Transverse colon (tissue), 4 donors: ENCODE measurements at regions of chr7 and their contacts with region 1.

Region 1: GRCh38 chr7:87886875-87887274 is 10.6 kb downstream of the DBF4 start:
- DNase-seq: no peak
- H3K4me3 ChIP-seq: no peak overlapping the region
- H3K27ac ChIP-seq: no peak overlapping the region
- H3K4me1 ChIP-seq: no peaks in the 10 kb centered on the region
- H3K27me3 ChIP-seq: no peaks in the 10 kb centered on the region
- CTCF ChIP-seq: peak; percentile 38 to 58 (median 50)
- EP300 ChIP-seq: no peak
- POLR2A ChIP-seq: no peak

Region 2: GRCh38 chr7:87416682-87417587 is 469.9 kb before region 1 on chr7:
- in situ Hi-C with region 1: no loop called
- intact Hi-C with region 1: loop called (anchors 5 kb)
- DNase-seq: peak; percentile 63
- H3K4me3 ChIP-seq: no peak overlapping the region
- H3K27ac ChIP-seq: no peak overlapping the region
- H3K4me1 ChIP-seq: no peaks in the 10 kb centered on the region
- H3K27me3 ChIP-seq: no peaks in the 10 kb centered on the region
- CTCF ChIP-seq: peak; percentile 62 to 80 (median 70)
- EP300 ChIP-seq: no peak
- POLR2A ChIP-seq: no peak

Region 3: DNA sequence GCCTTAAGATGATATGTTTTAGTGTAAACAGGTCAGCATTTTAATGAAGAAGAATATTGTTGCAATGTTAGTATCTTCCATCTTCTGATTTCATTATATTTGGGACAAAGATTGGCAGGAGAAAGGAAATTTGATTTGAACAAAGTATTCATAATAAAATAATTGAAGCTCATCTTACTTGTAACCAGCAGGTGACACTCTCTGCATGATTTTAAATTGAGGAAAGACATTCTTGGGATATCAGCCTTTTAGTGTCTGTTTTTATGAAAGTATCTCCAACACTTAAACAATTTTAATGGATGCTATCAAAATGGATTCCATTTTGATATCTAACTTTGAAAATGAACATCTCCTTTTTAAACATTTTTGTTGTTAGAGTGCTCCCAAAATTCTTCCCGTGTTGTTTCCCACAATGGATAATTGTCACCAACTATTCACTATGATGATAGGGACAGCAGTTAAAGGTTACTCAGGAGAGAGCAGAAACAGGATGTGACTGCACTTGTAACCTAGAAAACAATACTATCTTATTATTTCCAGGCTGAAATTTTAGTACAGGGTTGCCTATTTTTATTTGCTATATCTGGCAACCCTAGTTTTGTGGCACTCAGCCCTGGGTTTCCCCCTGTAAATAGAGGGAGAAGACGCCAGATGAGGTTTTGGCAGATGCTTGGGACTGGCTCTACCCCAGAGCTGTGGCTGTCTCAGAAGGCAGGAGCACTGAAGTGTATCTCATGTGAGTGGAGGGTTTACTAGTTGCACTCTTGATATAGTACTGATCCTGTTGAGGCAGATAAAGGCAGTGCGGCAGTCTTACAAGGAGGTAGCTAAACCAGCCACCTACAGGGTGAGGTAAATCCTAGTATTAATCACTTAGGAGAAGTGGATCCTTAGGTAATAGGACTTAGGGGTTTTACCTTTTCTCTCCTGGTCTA is 380.4 kb before region 1 on chr7:
- in situ Hi-C with region 1: loop called in 2 of 4 experiments (anchors 10 to 25 kb)
- intact Hi-C with region 1: no loop called
- DNase-seq: no peak
- H3K4me3 ChIP-seq: no peak overlapping the region
- H3K27ac ChIP-seq: no peak overlapping the region
- H3K4me1 ChIP-seq: no peaks in the 10 kb centered on the region
- H3K27me3 ChIP-seq: no peaks in the 10 kb centered on the region
- CTCF ChIP-seq: peak; percentile 35 to 54 (median 40)
- EP300 ChIP-seq: no peak
- POLR2A ChIP-seq: no peak

Region 4: DNA sequence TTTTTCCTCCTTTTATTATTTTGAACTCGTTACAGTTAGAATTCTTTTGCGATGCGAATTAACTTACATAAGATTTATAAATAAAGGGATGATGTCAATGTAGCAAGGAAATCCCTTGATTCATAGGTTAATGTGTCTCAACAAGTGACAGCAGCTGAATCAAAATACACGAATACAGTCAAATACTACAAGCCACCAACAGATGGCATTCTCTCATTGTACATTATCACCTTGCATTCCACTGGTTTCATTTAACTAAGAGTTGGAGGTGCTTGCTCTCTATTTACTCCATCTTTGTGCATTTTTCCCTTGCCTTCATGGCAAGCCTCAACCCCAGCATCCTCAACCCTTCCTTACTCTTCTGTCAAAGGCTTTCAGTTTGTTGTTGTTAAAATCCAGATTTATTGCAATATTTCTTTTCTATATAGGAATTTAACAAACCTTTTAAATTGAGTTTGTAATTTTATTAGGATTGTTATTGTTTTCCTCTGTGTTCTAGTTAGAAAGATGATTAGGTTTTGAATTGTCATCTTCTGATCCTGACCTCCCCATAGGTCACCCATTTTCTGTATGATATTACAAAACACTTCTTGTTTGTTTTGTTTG is 89.0 kb before region 1 on chr7:
- in situ Hi-C with region 1: loop called in 1 of 4 experiments (anchors 5 kb)
- intact Hi-C with region 1: no loop called
- DNase-seq: no peak
- H3K4me3 ChIP-seq: no peak overlapping the region
- H3K27ac ChIP-seq: no peak overlapping the region
- H3K4me1 ChIP-seq: peaks cover 0 to 4% (median 1%) of the 10 kb centered on the region in 4 donors
- H3K27me3 ChIP-seq: no peaks in the 10 kb centered on the region
- CTCF ChIP-seq: peak; percentile 38 to 62 (median 47)
- EP300 ChIP-seq: no peak
- POLR2A ChIP-seq: no peak